ENCODE measurements at regions of chr1 and their contacts with region 1.

Region 1: DNA sequence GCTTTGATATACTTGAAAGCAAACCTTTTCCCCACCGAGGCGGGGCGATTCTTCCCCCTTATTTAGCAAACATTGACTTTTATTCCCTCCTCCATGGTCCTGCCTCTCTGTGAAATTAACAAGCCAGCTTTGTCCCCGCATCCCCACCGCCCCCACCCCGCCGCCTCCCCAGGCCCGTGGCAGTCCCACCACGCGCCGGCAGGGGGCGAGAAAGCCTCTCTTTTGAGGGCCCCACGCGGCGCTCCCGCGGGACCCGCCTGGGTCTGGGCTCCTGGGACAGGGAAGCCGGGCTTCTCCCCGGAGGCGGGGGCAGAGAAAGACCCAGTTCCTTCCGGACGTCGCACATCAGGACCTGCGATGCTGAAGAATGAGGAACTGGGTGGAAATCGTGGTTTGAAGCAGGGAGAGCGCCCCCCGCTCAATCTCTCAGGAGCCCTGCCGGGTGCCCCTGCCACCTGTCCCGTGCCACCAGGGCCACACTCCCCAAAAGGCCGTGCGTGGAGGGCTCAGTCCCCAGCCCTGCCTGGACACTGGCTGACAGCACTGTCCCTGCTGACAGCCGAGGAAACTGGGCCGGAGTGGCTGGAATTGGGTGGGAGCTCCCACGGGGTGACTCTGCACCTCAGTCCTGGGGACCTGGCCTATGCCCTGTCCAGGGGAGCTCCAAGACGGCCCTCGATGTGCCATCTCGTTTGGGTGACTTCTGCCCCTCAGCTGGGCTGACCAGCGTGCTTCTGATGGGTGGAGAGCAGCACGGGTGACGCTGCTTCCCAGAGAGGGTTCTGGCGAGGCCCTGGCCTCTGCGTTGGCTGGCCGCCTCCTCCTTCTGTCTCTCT is 8.6 kb upstream of the ACTRT2 start:
- DNase-seq: peak; percentile 54 to 72 (median 72)
- H3K4me3 ChIP-seq: no peak overlapping the region
- H3K27ac ChIP-seq: no peak overlapping the region
- H3K4me1 ChIP-seq: peaks cover 0 to 11% (median 9%) of the 10 kb centered on the region in 4 experiments
- H3K27me3 ChIP-seq: peaks cover 0 to 3% (median 0%) of the 10 kb centered on the region in 5 experiments

Region 2: DNA sequence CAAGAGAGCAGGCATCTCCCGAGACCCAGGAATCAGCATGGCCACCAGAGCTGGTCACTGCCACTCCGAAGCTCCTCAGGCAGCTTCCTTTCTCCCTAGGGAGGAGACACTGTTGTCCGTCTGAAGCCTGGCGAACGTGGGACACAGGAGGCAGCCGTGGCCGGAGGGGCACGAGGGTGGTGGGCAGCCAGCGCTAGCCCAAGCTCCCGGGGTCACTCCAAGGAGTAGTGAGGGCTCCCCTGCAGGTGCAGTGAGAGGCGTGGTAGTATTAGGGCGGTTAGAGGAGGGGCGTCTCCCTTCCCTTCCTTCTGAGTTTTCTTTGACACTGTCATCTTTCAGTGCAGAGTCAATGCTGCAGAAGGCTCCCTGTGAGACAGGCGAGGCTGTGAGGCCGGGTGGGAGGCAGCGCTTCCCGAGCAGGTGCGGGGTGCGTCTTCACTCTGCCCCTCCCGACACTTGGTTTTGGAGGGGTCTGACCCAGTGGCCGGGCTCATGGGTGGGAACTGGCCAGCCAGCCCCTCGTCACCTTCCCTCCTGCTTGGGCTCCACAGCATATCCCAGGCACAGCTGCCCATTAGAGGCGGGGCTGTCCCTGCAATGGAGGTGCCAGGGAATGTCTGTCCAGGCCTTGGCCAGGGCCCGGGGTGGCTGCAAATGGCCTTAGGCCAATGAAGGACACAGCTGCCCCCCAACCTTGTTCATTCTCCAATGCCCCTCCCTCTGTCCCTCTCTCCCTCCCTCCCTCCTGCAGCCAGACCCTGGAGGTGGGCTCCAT is 270.2 kb after region 1 on chr1:
- CTCF ChIA-PET with region 1: interaction called, 13 read pairs
- POLR2A ChIA-PET with region 1: no interaction called
- DNase-seq: no peak
- H3K4me3 ChIP-seq: no peak overlapping the region
- H3K27ac ChIP-seq: no peak overlapping the region
- H3K4me1 ChIP-seq: peaks cover 0 to 5% (median 1%) of the 10 kb centered on the region in 4 experiments
- H3K27me3 ChIP-seq: no peaks in the 10 kb centered on the region

Region 3: DNA sequence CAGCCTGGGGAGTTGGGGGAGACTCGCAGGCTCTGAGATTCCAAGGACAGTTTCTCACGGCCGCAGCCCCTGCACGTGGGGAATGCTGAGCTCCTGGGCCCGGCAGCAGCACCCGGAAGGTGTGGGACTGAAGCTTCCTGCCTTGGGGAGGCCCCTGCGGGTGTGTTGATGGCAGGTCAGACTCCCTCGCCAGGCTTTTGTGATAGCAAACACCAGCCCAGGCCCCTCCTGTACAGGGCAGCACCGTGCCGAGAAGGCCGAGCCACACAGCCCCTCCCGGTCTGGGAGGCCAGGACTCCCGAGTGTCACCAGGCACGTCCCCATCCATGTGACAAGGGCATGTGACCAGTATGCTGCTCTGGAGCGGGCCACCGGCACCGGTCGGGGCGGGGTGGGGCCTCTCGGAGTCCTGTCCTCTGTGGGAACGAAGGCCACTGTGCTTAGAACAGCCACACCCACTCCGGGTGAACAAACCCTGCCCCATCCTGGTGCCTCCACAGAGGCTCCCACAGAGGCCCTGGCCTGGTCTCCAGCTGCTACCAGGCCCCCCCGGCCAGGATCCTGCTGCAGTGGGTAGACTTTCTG is 410.7 kb after region 1 on chr1:
- CTCF ChIA-PET with region 1: interaction called, 20 read pairs
- POLR2A ChIA-PET with region 1: no interaction called
- DNase-seq: peak in 2 of 3 donors; percentile 22 to 28
- H3K4me3 ChIP-seq: peak overlapping the region in 2 of 7 experiments; percentile 36 to 55
- H3K27ac ChIP-seq: no peak overlapping the region
- H3K4me1 ChIP-seq: peaks cover 0 to 32% (median 24%) of the 10 kb centered on the region in 4 experiments
- H3K27me3 ChIP-seq: no peaks in the 10 kb centered on the region

Measured in common myeloid progenitor, CD34-positive (primary cell).